ENCODE measurements at regions of chr4 and their contacts with region 1.

Region 1: GRCh38 chr4:172680691-172681090 is 487.9 kb upstream of the GALNT7 start:
- DNase-seq: no peak
- ATAC-seq: no peak

Region 2: DNA sequence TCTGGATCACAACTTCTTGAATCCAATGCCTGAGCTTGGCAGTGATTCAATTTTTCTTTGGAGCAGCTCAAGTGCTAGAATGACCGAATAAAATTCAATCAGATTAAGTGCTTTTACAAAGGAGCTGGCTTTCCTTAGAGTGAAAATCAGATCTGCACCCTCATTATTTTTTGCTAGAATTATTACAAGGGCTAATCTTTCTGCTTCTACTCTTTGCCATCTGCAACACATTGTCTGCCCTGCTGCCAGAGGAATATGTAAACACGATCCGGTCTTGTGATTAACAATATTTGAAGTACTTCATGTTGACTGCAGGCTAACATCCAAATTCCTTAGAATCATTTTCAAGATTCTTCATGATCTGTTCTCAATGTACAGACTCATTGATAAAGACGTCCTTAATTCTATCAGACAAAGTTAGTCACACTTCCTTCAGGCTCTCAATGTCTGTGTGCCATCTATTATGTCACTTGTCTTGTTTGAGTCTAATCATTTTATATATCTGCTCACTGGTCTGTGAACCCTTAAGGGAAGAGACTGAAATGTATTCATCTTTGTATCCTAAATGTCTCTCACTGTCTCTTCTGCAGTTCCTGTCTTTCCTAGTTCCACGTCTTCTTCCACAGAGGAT is 336.3 kb before region 1 on chr4:
- intact Hi-C with region 1: no loop called
- DNase-seq: no peak
- ATAC-seq: no peak

Region 3: GRCh38 chr4:172648471-172648870 is 32.2 kb before region 1 on chr4:
- intact Hi-C with region 1: loop called (anchors 2 kb)
- DNase-seq: no peak
- ATAC-seq: no peak

Region 4: GRCh38 chr4:173505924-173506518 is 825.3 kb after region 1 on chr4:
- intact Hi-C with region 1: no loop called
- DNase-seq: peak; percentile 81
- ATAC-seq: peak; percentile 73